Activated CD8-positive, alpha-beta T cell treated with anti-CD3 and anti-CD28 coated beads, Interleukin-2, amount 10 ng/mL, durations not matched to agents 7 days and 5 days (primary cell): ENCODE measurements at regions of chr11 and their contacts with region 1.

Region 1: DNA sequence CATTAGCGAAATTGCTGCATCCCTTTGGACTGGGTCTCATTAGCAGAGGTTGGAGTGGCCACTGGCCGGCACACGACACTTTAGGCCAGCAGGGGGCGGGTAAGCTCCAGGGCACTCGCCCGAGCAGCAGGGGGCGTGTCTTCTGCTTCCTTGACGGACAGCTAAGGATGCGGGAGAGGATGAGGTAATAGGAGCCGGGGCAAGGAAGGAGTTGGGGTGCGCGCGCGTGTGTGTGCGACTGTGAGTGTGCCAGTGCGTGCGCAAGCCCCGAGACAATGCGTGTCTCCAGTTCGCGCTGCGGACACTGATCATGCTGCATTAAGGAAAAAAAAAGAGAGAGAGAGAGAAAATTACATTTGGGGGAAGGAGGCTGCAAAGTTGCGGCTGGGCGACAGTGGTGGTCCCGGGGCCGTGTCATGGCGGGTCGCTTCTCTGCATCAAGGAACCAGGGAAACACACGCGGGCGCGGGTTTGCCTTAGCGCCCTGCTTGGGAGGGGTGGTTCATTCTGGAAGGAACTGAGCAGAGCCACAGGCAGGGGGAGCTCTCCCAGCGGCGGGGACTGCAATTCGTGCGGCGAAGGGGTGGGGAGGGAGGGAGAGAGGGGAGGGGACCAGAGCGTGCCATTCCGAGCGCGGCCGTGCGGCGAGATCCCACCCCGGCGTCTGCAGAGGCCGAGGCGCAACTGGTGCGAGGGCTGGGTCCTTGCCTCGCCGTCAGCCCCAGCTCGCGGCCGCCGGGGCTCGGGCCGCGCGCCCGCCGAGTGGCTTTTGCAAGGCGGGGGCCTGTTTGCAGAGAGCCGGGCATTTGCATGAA is at the start of gene DTX4:
- DNase-seq: peak; percentile 93
- ATAC-seq: peak; percentile 88
- H3K4me3 Mint-ChIP-seq: peak within 1 kb of the TSS; percentile 64
- H3K27ac Mint-ChIP-seq: no peak within 1 kb of the TSS
- H3K4me1 Mint-ChIP-seq: peaks cover 7% of the 10 kb centered on the region
- H3K27me3 Mint-ChIP-seq: peaks cover 27% of the 10 kb centered on the region
- total RNA-seq, gene DTX4: 0.18 to 0.45 TPM

Region 2: DNA sequence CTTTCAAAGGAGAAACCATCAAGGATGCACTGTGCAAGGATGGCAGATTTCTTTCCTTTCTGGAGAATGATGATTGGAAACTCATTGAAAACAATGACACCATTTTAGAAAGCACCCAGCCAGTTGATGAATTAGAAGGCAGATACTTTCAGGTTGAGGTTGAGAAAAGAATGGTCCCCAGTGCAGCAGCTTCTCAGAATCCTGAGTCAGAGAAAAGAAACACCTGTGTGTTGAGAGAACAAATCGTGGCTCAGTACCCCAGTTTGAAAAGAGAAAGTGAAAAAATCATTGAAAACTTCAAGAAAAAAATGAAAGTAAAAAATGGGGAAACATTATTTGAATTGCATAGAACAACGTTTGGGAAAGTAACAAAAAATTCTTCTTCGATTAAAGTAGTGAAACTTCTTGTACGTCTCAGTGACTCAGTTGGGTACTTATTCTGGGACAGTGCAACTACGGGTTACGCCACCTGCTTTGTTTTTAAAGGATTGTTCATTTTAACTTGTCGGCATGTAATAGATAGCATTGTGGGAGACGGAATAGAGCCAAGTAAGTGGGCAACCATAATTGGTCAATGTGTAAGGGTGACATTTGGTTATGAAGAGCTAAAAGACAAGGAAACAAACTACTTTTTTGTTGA is 19.3 kb before region 1 on chr11:
- CTCF ChIA-PET with region 1: interaction called, 57 read pairs
- POLR2A ChIA-PET with region 1: no interaction called
- DNase-seq: no peak
- ATAC-seq: peak; percentile 42
- H3K4me3 Mint-ChIP-seq: no peak overlapping the region
- H3K27ac Mint-ChIP-seq: no peak overlapping the region
- H3K4me1 Mint-ChIP-seq: peaks cover 52% of the 10 kb centered on the region
- H3K27me3 Mint-ChIP-seq: no peaks in the 10 kb centered on the region

Region 3: DNA sequence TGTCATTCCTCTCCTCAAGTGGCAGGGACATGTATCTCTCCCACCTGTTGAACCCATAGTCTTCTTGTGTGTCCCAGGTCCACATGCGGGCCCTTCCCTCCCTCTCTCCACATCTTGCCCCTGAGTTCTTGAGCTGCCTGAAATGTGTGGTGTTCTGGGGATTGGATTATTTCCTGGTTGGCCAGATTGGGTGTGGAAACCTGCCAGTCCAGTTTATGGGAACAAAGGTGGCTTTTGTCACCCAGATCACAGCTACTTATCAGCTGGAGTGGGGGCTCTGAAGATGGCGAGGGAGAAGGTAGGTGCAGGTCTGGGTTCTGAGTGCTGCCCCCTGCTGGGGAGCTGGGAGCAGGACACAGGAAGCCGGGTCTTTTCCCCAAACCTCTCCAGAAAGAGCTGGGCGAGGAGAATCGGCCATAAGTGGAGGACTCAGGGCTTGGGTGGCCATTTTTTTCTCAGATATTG is 14.4 kb after region 1 on chr11:
- CTCF ChIA-PET with region 1: interaction called, 113 read pairs
- POLR2A ChIA-PET with region 1: interaction called, 3 read pairs
- DNase-seq: peak; percentile 53
- ATAC-seq: peak; percentile 71
- H3K4me3 Mint-ChIP-seq: no peak overlapping the region
- H3K27ac Mint-ChIP-seq: no peak overlapping the region
- H3K4me1 Mint-ChIP-seq: peaks cover 4% of the 10 kb centered on the region
- H3K27me3 Mint-ChIP-seq: peaks cover 3% of the 10 kb centered on the region

Region 4: DNA sequence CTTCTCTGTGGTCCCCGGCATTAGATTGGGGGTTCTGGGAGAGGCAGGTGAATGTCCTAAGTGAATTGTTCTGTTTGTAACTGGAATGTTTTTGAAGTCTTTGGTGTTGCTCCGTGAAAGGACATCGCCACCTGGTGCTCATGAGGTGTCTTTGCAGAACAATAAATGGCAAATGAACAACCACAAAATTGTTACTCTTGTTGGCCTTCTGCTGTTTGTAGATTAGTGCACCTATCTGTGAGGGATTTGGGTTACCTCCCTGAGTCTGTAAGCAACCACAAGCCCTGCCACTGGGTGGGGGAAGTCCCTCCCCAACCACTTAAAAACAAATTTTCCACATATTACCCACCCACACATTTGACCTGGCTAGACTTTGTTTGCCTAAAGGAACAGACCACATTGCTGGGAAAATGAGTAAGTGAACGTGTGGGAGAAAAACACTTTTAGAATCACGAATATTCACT is 36.3 kb after region 1 on chr11:
- CTCF ChIA-PET with region 1: interaction called, 30 read pairs
- POLR2A ChIA-PET with region 1: no interaction called
- DNase-seq: peak; percentile 50
- ATAC-seq: peak; percentile 76
- H3K4me3 Mint-ChIP-seq: no peak overlapping the region
- H3K27ac Mint-ChIP-seq: no peak overlapping the region
- H3K4me1 Mint-ChIP-seq: peaks cover 17% of the 10 kb centered on the region
- H3K27me3 Mint-ChIP-seq: peaks cover 27% of the 10 kb centered on the region

Region 5: DNA sequence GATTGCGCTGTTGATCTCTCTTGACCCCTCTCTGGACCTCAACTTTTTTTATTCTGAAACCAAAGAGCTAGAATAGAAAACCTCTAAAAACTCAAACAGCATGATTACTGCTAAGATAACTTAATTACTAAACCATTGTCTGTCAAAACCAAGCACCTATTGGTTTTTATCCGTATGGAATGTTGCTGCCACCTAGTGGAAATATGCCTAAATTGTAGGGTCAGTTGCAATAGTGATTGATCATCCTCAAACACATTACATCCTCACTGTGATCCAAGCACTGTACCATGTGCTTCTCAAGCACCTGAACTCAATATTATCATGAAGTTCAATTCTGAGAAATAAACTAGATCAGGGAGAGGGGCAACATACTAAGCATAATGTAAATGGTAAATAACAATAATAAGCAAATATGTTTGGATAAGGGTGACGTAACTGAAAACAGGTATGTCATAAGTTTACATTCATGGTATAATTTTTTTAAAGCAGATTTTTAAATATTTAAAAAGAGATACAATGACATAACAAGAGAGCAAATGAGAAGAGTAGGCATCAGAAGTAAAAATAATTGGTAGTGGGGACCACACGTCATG is 258.3 kb after region 1 on chr11:
- CTCF ChIA-PET with region 1: interaction called, 24 read pairs
- POLR2A ChIA-PET with region 1: no interaction called
- DNase-seq: peak; percentile 68
- ATAC-seq: peak; percentile 61
- H3K4me3 Mint-ChIP-seq: no peak overlapping the region
- H3K27ac Mint-ChIP-seq: no peak overlapping the region
- H3K4me1 Mint-ChIP-seq: no peaks in the 10 kb centered on the region
- H3K27me3 Mint-ChIP-seq: peaks cover 16% of the 10 kb centered on the region